IMR-90 (cell line): ENCODE measurements at regions of chr3 and their contacts with region 1.

Region 1: DNA sequence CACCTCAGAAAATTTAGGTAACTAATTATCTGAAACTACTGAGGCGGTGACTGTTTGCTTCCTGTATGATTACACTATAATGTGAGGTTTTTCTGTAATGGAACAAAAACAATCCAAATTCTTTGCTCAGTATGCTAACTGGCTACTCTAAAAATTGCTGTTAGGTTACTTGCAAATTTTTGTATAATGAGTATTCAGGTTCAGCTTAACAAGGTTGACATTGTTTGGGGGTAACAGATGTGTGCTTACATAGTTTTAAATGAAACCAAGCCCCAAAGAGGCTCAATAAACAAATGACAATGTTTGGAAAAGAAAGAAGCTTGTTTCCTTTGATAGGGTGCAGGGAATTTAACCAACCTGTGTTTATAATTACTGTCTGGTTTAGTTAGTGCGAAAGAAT is 414.5 kb upstream of the MDFIC2 start:
- DNase-seq: peak; percentile 89
- ATAC-seq: peak; percentile 71
- H3K4me3 ChIP-seq: no peak overlapping the region
- H3K27ac ChIP-seq: no peak overlapping the region
- H3K4me1 ChIP-seq: peaks cover 9% of the 10 kb centered on the region
- H3K27me3 ChIP-seq: no peaks in the 10 kb centered on the region
- CTCF ChIP-seq: no peak
- POLR2A ChIP-seq: no peak
- RAD21 ChIP-seq: no peak

Region 2: DNA sequence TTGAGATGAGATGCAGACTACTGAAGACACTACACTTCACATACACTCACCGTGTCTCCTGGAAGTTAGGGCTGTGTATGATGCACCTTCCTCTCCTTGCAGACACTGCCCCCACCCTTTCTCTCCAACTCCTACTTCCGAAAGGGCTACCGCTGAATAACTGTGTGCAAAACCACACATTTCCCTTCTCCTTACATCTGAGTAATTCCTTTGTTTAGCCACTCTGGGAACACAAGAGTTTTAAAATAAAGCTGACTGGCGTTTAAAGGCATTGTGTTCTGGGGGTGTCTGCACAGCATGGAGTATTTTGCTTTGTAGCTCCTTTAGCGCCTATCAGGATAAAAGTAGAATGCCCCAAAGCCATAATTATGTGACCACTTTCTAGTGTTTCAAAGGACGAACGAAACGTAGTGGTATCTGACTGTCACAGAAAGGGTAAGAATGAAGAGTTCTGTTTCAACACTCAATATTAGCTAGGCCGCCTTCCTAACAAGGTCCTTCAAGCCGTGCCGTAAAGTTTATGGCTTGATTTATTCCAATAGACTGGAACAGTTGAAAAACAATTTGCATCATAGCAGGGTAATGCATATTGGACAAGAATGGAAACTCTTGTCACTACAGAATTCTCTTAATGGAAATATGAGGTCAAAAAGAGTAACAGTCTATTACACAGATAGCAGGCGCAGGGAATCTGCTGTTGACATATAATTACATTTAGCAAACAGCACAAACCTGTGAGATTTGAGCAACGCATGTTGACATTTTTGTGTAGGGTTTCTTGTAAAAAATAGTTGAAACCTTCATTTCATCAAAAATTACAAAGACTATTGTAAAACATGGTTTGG is 236.7 kb after region 1 on chr3:
- CTCF ChIA-PET with region 1: no interaction called
- POLR2A ChIA-PET with region 1: no interaction called
- dilution Hi-C with region 1: no loop called
- in situ Hi-C with region 1: no loop called
- intact Hi-C with region 1: loop called (anchors 5 kb)
- DNase-seq: no peak
- ATAC-seq: no peak
- H3K4me3 ChIP-seq: no peak overlapping the region
- H3K27ac ChIP-seq: no peak overlapping the region
- H3K4me1 ChIP-seq: 0 out of 2 replicates have a peak, but pooled peaks cover 2% of the 10 kb centered on the region
- H3K27me3 ChIP-seq: no peaks in the 10 kb centered on the region
- CTCF ChIP-seq: no peak
- POLR2A ChIP-seq: no peak
- RAD21 ChIP-seq: no peak

Region 3: DNA sequence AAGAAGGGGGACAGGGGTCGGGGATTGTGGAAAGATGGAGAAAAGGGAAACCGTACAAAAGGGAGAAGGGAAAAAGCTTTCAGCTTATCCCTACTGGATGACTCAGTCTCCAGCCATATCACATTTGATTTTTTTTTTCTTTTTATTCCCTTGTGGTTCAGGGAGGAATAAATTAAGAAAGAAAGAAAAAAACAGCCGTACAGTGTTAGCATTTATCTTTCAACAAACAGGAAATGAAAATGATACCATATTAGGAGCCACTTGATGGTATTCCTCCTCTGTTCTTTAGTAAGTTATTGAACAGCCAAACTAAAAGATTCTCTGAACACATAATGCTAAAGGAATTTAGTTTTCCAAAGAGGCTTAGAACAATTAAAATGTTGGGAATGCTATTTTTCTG is 262.2 kb after region 1 on chr3:
- CTCF ChIA-PET with region 1: no interaction called
- POLR2A ChIA-PET with region 1: no interaction called
- dilution Hi-C with region 1: no loop called
- in situ Hi-C with region 1: no loop called
- intact Hi-C with region 1: loop called (anchors 5 kb)
- DNase-seq: peak; percentile 75
- ATAC-seq: peak; percentile 66
- H3K4me3 ChIP-seq: no peak overlapping the region
- H3K27ac ChIP-seq: peak overlapping the region; percentile 51; the same call in 1 of the 2 replicates
- H3K4me1 ChIP-seq: peaks cover 25% of the 10 kb centered on the region
- H3K27me3 ChIP-seq: no peaks in the 10 kb centered on the region
- CTCF ChIP-seq: no peak
- POLR2A ChIP-seq: no peak
- RAD21 ChIP-seq: no peak

Region 4: GRCh38 chr3:71210257-71211007 is 483.5 kb after region 1 on chr3:
- CTCF ChIA-PET with region 1: no interaction called
- POLR2A ChIA-PET with region 1: no interaction called
- dilution Hi-C with region 1: no loop called
- in situ Hi-C with region 1: no loop called
- intact Hi-C with region 1: no loop called
- DNase-seq: peak; percentile 76
- ATAC-seq: peak; percentile 76
- H3K4me3 ChIP-seq: peak overlapping the region; percentile 2; the same call in 1 of the 2 replicates
- H3K27ac ChIP-seq: peak overlapping the region; percentile 69; the same call in 1 of the 2 replicates
- H3K4me1 ChIP-seq: peaks cover 14% of the 10 kb centered on the region
- H3K27me3 ChIP-seq: no peaks in the 10 kb centered on the region
- CTCF ChIP-seq: 0 out of 2 replicates have a peak, but pooled peaks have one; percentile 12
- POLR2A ChIP-seq: no peak
- RAD21 ChIP-seq: peak; percentile 27; the same call in 1 of the 2 replicates